PC-9 (cell line): ENCODE measurements at regions of chr2 and their contacts with region 1.

Region 1: DNA sequence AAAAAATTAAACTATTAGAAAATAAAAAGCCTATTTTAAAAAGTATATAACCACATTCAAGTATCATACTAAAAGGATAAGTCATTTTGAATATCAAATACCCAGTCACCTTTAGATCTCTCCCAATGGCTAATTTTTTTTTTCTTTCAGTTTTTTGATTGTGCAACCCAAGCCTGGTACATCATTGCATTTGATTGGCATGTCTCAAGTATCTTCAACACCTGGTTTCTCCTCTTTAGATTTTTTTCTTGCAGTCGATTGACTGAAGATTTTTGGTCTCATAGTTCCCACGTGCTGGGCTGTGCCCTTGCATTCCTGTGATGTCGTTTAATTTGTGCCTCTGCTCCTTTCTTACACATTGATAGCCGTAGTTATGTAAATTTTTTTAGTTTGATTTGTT is 40.7 kb downstream of the ATIC start:
- DNase-seq: no peak
- H3K4me3 ChIP-seq: no peak overlapping the region
- H3K27ac ChIP-seq: no peak overlapping the region
- H3K4me1 ChIP-seq: no peaks in the 10 kb centered on the region
- H3K27me3 ChIP-seq: no peaks in the 10 kb centered on the region
- CTCF ChIP-seq: no peak

Region 2: DNA sequence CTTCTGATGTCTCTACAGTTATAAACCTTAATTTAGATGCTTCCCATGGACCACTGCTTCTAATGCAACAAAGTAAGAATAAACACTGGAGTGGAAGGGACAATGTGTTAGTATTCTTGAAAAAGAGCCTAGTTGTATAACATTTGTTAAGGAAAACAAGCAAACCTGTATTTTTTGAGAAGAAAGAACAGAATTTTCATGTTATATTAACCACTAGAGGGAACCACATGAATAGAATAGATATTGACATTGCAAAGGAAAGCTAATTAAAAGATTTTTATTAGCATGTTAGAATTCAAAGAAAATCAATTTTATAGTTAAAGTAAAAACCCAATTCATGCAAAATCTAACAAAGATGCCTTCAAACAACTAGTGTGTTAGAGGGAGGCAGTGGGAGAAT is 391.9 kb before region 1 on chr2:
- CTCF ChIA-PET with region 1: no interaction called
- POLR2A ChIA-PET with region 1: no interaction called
- intact Hi-C with region 1: no loop called
- DNase-seq: no peak
- H3K4me3 ChIP-seq: no peak overlapping the region
- H3K27ac ChIP-seq: no peak overlapping the region
- H3K4me1 ChIP-seq: no peaks in the 10 kb centered on the region
- H3K27me3 ChIP-seq: no peaks in the 10 kb centered on the region
- CTCF ChIP-seq: peak; percentile 73

Region 3: GRCh38 chr2:215372968-215373649 is 20.5 kb after region 1 on chr2:
- CTCF ChIA-PET with region 1: no interaction called
- POLR2A ChIA-PET with region 1: interaction called, 18 read pairs
- intact Hi-C with region 1: no loop called
- DNase-seq: no peak
- H3K4me3 ChIP-seq: no peak overlapping the region
- H3K27ac ChIP-seq: no peak overlapping the region
- H3K4me1 ChIP-seq: no peaks in the 10 kb centered on the region
- H3K27me3 ChIP-seq: no peaks in the 10 kb centered on the region
- CTCF ChIP-seq: no peak

Region 4: DNA sequence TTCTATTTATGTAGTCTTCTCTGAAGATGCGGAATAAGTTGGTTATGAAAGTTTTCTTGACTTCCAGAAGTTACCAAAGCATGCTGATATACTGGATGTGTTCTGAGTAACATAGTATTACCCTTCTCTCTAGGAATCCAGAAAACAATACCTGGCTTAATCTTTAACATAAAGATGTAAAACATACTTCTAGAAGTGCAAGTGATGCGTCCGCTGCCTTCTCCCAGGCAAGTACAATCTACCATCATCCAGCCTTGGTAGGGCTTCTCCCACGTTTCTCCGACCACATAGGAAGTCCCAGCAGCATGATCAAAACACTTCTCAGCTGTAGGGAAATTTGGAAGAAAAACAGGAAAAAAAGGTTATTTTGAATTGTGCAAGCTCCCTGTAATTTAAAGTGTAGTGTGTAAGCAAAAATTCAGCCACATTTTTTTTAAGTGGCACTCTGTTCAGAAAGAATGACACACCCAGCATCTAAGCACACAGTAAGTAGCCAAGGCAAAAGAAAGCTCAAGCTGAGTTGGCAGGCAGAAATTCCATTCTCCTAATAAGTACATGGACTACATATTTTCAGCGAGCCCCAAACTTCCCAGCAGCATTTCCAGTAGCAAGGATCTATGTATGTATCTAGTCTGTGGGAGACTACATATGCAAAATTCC is 78.1 kb after region 1 on chr2:
- CTCF ChIA-PET with region 1: no interaction called
- POLR2A ChIA-PET with region 1: no interaction called
- intact Hi-C with region 1: loop called (anchors 5 kb)
- DNase-seq: no peak
- H3K4me3 ChIP-seq: no peak overlapping the region
- H3K27ac ChIP-seq: no peak overlapping the region
- H3K4me1 ChIP-seq: 0 out of 2 replicates have a peak, but pooled peaks cover 3% of the 10 kb centered on the region
- H3K27me3 ChIP-seq: no peaks in the 10 kb centered on the region
- CTCF ChIP-seq: no peak